ENCODE measurements at regions of chr21 and their contacts with region 1.

Region 1: GRCh38 chr21:36359185-36359584 is 26.0 kb upstream of the CHAF1B start:
- DNase-seq: no peak
- H3K27ac ChIP-seq: no peak overlapping the region
- CTCF ChIP-seq: no peak

Region 2: GRCh38 chr21:36297921-36298594 is 61.1 kb before region 1 on chr21:
- CTCF ChIA-PET with region 1: no interaction called
- POLR2A ChIA-PET with region 1: interaction called, 11 read pairs
- DNase-seq: peak; percentile 56
- H3K27ac ChIP-seq: peak overlapping the region; percentile 55
- CTCF ChIP-seq: no peak

Region 3: GRCh38 chr21:36310016-36310415 is 49.2 kb before region 1 on chr21:
- CTCF ChIA-PET with region 1: no interaction called
- POLR2A ChIA-PET with region 1: no interaction called
- DNase-seq: no peak
- H3K27ac ChIP-seq: no peak overlapping the region
- CTCF ChIP-seq: no peak

Measured in RWPE1 (cell line).